Dorsolateral prefrontal cortex (tissue), 120 donors: ENCODE measurements at regions of chr9 and their contacts with region 1.

Region 1: DNA sequence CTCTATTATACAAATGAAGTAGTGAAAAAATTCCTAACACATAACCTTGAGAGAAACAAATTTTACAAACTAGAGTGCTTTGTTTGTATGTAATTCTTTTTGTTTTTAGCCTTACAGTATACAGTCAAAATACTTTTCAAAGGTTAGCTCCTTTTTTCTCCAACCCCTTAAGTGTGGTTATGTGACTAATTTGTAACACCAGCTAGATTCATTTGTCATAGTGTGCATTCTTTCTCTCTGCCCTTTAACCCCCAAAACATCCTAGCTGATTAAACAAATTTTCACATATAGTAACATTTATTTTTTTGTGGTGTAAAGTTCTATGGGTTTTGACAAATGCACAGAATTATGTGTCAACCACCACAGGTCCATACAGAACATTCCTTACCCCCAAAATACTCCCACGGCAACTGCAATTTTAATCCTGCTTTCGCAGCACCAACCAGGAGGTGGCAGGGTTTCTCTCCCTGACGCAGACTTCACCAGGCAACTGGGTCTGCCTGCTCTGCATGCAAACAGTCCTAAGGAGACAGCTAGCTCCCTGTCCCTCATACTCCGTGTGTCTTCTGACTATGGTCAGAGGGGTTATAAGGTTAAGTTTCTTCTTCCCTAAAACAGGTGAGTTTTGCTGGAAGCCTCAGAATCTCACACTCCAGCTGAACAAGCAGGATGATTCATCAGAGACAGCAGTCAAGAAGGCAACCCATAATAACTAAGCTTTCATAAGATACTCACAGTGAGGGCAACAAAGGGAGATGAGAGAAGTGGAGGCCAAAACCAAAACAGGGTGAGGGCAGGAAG is 44.5 kb upstream of the NR5A1 start:
- DNase-seq: peak; percentile 16 to 69 (median 58)
- H3K4me3 ChIP-seq: no peak overlapping the region
- H3K27ac ChIP-seq: no peak overlapping the region
- H3K27me3 ChIP-seq: no peaks in the 10 kb centered on the region
- CTCF ChIP-seq: peak; percentile 40 to 77 (median 62)

Region 2: GRCh38 chr9:124716808-124717207 is 165.1 kb after region 1 on chr9:
- intact Hi-C with region 1: loop called in 1 of 2 experiments (anchors 10 kb)
- DNase-seq: no peak
- H3K4me3 ChIP-seq: no peak overlapping the region
- H3K27ac ChIP-seq: no peak overlapping the region
- H3K27me3 ChIP-seq: no peaks in the 10 kb centered on the region
- CTCF ChIP-seq: no peak

Region 3: GRCh38 chr9:124764774-124765438 is 213.2 kb after region 1 on chr9:
- intact Hi-C with region 1: loop called in 1 of 2 experiments (anchors 10 kb)
- DNase-seq: no peak
- H3K4me3 ChIP-seq: no peak overlapping the region
- H3K27ac ChIP-seq: no peak overlapping the region
- H3K27me3 ChIP-seq: peaks cover 0 to 6% (median 0%) of the 10 kb centered on the region in 45 donors
- CTCF ChIP-seq: peak in 39 of 56 donors; percentile 13 to 59 (median 32)